ENCODE measurements at regions of chr16 and their contacts with region 1.

Region 1: GRCh38 chr16:56643080-56643778 is 4.8 kb downstream of the MT1A start:
- DNase-seq: peak; percentile 80 to 85
- ATAC-seq: peak; percentile 97 to 100
- H3K4me3 ChIP-seq: peak overlapping the region; percentile 38
- H3K27ac ChIP-seq: peak overlapping the region; percentile 72 to 90
- H3K4me1 ChIP-seq: peaks cover 10% of the 10 kb centered on the region; the same call in 2 of the 3 replicates
- CTCF ChIP-seq: peak; percentile 51
- EP300 ChIP-seq: no peak
- POLR2A ChIP-seq: no peak
- RAD21 ChIP-seq: peak; percentile 60 to 67

Region 2: DNA sequence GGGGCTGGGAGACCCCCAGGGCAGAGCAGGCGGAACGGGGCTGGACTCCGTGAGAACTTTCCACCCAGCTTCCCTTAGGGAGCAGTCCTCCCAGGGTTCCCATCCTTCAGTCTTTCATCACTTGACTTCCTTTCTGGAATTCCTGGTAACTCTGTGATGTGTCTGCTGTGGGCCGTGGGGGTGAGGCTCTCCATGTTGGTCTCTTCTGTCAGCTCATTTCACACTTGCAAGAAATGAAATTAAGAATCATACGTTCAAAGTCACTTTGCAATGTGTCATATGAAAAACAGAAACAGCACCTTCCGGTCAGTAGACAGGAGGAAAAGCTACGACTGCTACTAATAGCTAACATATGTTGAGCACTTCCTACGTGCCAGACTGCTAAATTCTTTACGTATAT is 118.0 kb before region 1 on chr16:
- CTCF ChIA-PET with region 1: no interaction called
- POLR2A ChIA-PET with region 1: no interaction called
- DNase-seq: no peak
- ATAC-seq: no peak
- H3K4me3 ChIP-seq: no peak overlapping the region
- H3K27ac ChIP-seq: no peak overlapping the region
- H3K4me1 ChIP-seq: peaks cover 4% of the 10 kb centered on the region; the same call in 2 of the 3 replicates
- CTCF ChIP-seq: no peak
- EP300 ChIP-seq: no peak
- POLR2A ChIP-seq: no peak
- RAD21 ChIP-seq: no peak

Region 3: DNA sequence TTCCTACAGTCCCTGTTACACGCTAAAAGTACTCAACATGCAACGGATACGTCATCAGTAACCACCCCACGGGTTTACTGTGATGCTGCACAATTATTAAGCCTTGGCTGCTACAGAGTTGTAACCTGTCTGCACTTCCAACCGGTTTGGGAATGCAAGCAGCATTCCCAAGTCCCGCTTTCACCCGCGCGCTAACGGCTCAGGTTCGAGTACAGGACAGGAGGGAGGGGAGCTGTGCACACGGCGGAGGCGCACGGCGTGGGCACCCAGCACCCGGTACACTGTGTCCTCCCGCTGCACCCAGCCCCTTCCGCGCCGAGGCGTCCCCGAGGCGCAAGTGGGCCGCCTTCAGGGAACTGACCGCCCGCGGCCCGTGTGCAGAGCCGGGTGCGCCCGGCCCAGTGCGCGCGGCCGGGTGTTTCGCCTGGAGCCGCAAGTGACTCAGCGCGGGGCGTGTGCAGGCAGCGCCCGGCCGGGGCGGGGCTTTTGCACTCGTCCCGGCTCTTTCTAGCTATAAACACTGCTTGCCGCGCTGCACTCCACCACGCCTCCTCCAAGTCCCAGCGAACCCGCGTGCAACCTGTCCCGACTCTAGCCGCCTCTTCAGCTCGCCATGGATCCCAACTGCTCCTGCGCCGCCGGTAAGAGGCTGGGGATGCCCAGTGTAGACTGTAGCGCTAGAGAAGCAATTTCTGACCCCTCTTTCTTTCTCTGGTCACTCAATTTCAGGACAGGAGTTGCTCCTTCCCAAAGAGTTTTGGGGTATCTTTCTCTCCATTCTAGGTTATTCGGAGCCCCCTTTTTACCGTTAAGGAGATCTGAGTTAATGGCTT is 35.0 kb before region 1 on chr16 and contains the start of gene MT2A:
- CTCF ChIA-PET with region 1: interaction called, 340 read pairs
- POLR2A ChIA-PET with region 1: interaction called, 33 read pairs
- DNase-seq: peak; percentile 92 to 97
- ATAC-seq: peak; percentile 67 to 83
- H3K4me3 ChIP-seq: peak within 1 kb of the TSS; percentile 61
- H3K27ac ChIP-seq: peak within 1 kb of the TSS; percentile 93 to 96
- H3K4me1 ChIP-seq: peaks cover 66% of the 10 kb centered on the region
- CTCF ChIP-seq: no peak
- EP300 ChIP-seq: no peak; a peak in 1 of 5 replicates
- POLR2A ChIP-seq: peak; percentile 66
- RAD21 ChIP-seq: peak in 1 of 2 experiments; percentile 26; a peak in 1 of 5 replicates
- polyA plus RNA-seq, gene MT2A: 39.1 and 69.4 TPM in 2 replicates

Region 4: GRCh38 chr16:56625140-56625942 is 17.9 kb before region 1 on chr16 and contains the start of gene MT1E:
- CTCF ChIA-PET with region 1: interaction called, 18 read pairs
- POLR2A ChIA-PET with region 1: interaction called, 5 read pairs
- DNase-seq: no peak
- ATAC-seq: no peak
- H3K4me3 ChIP-seq: no peak within 1 kb of the TSS
- H3K27ac ChIP-seq: peak within 1 kb of the TSS; percentile 72 to 86
- H3K4me1 ChIP-seq: peaks cover 14% of the 10 kb centered on the region
- CTCF ChIP-seq: no peak
- EP300 ChIP-seq: no peak
- POLR2A ChIP-seq: no peak
- RAD21 ChIP-seq: no peak
- polyA plus RNA-seq, gene MT1E: not detected in 2 replicates

Region 5: DNA sequence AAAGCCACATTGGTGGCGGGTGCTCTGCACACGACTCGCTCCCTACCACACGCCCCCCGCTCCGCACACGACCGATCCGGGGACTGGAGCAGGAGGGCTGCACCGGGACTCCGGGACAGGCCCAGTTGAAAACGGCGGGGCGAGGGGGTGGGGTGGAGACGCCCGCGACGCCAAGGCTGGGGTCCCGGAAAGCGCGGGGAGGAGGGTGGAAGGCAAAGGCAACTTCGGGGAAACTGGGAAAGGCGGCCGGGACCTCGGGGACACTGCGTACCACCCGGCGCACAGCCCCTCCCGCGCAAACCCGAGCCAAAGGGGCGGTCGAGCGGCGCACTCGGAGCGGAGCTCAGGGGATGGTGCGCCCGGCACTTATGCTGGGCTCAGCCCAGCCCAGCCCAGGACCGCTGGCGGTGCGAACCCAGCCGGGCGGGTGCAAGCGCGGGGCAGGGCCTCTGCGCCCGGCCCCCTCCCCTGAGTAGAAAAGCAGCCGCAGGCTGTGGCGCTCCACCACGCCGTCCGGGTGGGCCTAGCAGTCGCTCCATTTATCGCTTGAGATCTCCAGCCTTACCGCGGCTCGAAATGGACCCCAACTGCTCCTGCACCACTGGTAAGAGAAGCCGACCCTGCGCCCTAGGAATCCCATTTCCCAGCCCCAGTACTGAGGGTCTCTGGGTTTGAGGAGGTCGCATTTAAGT is 10.9 kb before region 1 on chr16 and contains the start of gene MT1M:
- CTCF ChIA-PET with region 1: interaction called, 16 read pairs
- POLR2A ChIA-PET with region 1: interaction called, 3 read pairs
- DNase-seq: no peak
- ATAC-seq: no peak
- H3K4me3 ChIP-seq: no peak within 1 kb of the TSS
- H3K27ac ChIP-seq: no peak within 1 kb of the TSS
- H3K4me1 ChIP-seq: peaks cover 5% of the 10 kb centered on the region
- CTCF ChIP-seq: no peak
- EP300 ChIP-seq: no peak
- POLR2A ChIP-seq: no peak
- RAD21 ChIP-seq: no peak
- polyA plus RNA-seq, gene MT1M: not detected in 2 replicates

Region 6: GRCh38 chr16:56657555-56658326 is 14.5 kb after region 1 on chr16 and contains the start of gene MT1F:
- CTCF ChIA-PET with region 1: interaction called, 17 read pairs
- POLR2A ChIA-PET with region 1: interaction called, 3 read pairs
- DNase-seq: peak; percentile 75 to 78
- ATAC-seq: peak; percentile 93 to 94
- H3K4me3 ChIP-seq: peak within 1 kb of the TSS; percentile 56
- H3K27ac ChIP-seq: peak within 1 kb of the TSS; percentile 75 to 83
- H3K4me1 ChIP-seq: peaks cover 6% of the 10 kb centered on the region; the same call in 2 of the 3 replicates
- CTCF ChIP-seq: no peak
- EP300 ChIP-seq: no peak
- POLR2A ChIP-seq: 0 out of 2 replicates have a peak, but pooled peaks have one; percentile 15
- RAD21 ChIP-seq: no peak
- polyA plus RNA-seq, gene MT1F: 4.1 and 5.6 TPM in 2 replicates

Region 7: DNA sequence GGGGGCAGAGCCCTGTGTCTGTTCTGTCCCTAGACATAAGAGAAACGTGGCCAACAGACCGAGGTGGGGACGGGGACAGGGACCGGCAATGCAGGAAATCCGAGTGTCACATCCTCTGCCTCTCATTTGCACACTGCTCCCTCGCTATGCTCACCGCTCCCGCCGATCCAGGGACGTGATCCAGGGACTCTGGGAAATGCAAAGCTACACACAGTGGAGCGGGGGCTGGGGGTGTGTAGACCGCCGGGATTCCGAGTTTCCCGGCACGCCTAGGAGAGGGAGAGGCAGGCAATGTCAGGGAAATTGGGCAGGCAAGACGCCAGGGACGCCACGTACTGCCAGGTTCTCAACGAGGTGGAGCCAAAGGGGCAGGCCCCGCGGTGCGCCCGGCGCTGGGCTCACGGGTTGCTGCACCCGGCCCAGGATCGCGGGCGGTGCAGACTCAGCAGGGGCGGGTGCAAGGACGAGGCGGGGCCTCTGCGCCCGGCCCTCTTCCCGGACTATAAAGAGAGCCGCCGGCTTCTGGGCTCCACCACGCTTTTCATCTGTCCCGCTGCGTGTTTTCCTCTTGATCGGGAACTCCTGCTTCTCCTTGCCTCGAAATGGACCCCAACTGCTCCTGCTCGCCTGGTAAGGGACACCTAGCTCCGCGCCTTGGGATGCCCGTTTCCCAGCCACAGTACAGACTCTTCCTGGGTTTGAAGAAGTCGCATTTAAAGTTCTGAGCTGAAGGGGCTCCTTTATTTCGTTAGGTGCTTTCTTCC is 38.9 kb after region 1 on chr16 and contains the start of gene MT1X:
- CTCF ChIA-PET with region 1: interaction called, 13 read pairs
- POLR2A ChIA-PET with region 1: interaction called, 5 read pairs
- DNase-seq: peak; percentile 85 to 89
- ATAC-seq: peak; percentile 96 to 99
- H3K4me3 ChIP-seq: peak within 1 kb of the TSS; percentile 60
- H3K27ac ChIP-seq: peak within 1 kb of the TSS; percentile 84 to 85
- H3K4me1 ChIP-seq: peaks cover 9% of the 10 kb centered on the region; the same call in 2 of the 3 replicates
- CTCF ChIP-seq: no peak
- EP300 ChIP-seq: no peak
- POLR2A ChIP-seq: peak; percentile 75
- RAD21 ChIP-seq: no peak
- polyA plus RNA-seq, gene MT1X: 44.0 and 74.5 TPM in 2 replicates